ENCODE measurements at regions of chr9 and their contacts with region 1.

Region 1: GRCh38 chr9:5593904-5594303 is 35.0 kb upstream of the RIC1 start:
- DNase-seq: no peak
- H3K4me3 ChIP-seq: no peak overlapping the region
- H3K27ac ChIP-seq: no peak overlapping the region
- H3K4me1 ChIP-seq: no peaks in the 10 kb centered on the region
- H3K27me3 ChIP-seq: no peaks in the 10 kb centered on the region
- CTCF ChIP-seq: no peak
- POLR2A ChIP-seq: no peak

Region 2: GRCh38 chr9:4762108-4762885 is 831.6 kb before region 1 on chr9:
- intact Hi-C with region 1: loop called (anchors 10 kb)
- DNase-seq: peak; percentile 76
- H3K4me3 ChIP-seq: no peak overlapping the region
- H3K27ac ChIP-seq: no peak overlapping the region
- H3K4me1 ChIP-seq: no peaks in the 10 kb centered on the region
- H3K27me3 ChIP-seq: no peaks in the 10 kb centered on the region
- CTCF ChIP-seq: peak; percentile 54 to 88 (median 86)
- POLR2A ChIP-seq: no peak

Region 3: DNA sequence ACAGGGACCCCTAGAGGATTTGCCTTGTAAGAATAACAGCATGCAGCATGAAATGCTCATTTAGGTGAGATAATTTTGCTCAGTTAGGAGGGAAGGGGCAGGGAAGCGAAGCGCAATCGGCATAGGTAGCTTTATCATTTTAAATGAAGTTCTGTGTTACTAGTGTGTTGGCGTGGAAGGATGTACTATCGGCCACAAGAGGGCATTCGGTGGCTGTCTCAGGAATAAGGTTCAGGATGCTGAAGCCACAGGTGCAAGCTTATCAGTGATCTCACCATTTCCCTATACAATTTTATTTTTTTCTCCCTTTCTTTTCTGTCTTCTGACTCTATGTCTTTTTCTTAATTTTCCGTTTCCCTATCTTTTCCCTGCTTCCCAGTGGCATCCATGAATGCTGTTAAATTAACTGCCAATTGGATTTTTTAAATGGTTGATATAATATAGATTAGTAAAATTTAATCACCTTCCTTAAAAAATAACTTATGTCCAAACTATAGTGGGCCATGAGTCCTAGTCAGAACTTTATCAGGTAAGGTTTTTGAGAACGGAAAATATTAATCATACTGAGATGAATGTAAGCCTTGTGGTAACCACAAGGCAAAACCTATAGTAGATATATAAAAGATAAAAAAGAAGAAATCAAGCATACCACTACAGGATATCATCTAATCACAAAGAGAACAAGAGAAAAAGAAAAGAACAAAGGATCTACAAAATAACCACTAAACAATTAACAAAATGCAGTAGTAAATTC is 407.3 kb before region 1 on chr9:
- intact Hi-C with region 1: loop called (anchors 5 kb)
- DNase-seq: peak; percentile 57
- H3K4me3 ChIP-seq: no peak overlapping the region
- H3K27ac ChIP-seq: no peak overlapping the region
- H3K4me1 ChIP-seq: no peaks in the 10 kb centered on the region
- H3K27me3 ChIP-seq: no peaks in the 10 kb centered on the region
- CTCF ChIP-seq: peak; percentile 31 to 68 (median 62)
- POLR2A ChIP-seq: no peak

Region 4: DNA sequence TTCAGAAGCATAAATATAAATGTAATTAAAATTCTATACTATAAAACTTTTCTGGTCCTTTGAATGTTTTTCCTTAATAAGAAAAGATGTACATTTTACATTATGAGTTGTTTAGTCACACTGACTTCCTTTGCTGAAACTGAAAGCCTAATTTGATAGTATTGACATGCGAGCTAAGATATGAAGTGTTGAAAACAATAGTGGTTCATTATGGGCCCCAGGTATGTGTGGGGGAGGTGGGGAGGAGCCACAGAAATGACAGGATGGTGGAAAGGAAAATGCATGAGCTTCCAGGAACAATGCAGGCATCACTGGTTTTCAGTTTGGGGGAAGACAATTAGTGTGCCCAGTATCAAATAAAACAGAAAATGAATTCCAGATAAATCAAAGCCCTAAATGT is 218.8 kb before region 1 on chr9:
- intact Hi-C with region 1: no loop called
- DNase-seq: no peak
- H3K4me3 ChIP-seq: no peak overlapping the region
- H3K27ac ChIP-seq: no peak overlapping the region
- H3K4me1 ChIP-seq: no peaks in the 10 kb centered on the region
- H3K27me3 ChIP-seq: no peaks in the 10 kb centered on the region
- CTCF ChIP-seq: no peak
- POLR2A ChIP-seq: no peak

Region 5: DNA sequence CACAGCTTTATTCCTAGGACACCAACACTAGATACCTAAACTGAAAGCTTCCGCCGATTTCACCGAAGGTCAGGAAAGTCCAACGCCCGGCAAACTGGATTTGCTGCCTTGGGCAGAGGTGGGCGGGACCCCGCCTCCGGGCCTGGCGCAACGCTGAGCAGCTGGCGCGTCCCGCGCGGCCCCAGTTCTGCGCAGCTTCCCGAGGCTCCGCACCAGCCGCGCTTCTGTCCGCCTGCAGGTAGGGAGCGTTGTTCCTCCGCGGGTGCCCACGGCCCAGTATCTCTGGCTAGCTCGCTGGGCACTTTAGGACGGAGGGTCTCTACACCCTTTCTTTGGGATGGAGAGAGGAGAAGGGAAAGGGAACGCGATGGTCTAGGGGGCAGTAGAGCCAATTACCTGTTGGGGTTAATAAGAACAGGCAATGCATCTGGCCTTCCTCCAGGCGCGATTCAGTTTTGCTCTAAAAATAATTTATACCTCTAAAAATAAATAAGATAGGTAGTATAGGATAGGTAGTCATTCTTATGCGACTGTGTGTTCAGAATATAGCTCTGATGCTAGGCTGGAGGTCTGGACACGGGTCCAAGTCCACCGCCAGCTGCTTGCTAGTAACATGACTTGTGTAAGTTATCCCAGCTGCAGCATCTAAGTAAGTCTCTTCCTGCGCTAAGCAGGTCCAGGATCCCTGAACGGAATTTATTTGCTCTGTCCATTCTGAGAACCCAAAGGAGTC is 143.4 kb before region 1 on chr9 and contains the start of gene CD274:
- intact Hi-C with region 1: loop called (anchors 5 kb)
- DNase-seq: peak; percentile 84
- H3K4me3 ChIP-seq: peak within 1 kb of the TSS; percentile 34 to 42
- H3K27ac ChIP-seq: peak within 1 kb of the TSS; percentile 77 to 81
- H3K4me1 ChIP-seq: no peaks in the 10 kb centered on the region
- H3K27me3 ChIP-seq: no peaks in the 10 kb centered on the region
- CTCF ChIP-seq: peak; percentile 41 to 86 (median 75)
- POLR2A ChIP-seq: peak; percentile 57
- total RNA-seq, gene CD274: 0.82 to 1.9 TPM